ENCODE measurements at regions of chr3 and their contacts with region 1.

Region 1: DNA sequence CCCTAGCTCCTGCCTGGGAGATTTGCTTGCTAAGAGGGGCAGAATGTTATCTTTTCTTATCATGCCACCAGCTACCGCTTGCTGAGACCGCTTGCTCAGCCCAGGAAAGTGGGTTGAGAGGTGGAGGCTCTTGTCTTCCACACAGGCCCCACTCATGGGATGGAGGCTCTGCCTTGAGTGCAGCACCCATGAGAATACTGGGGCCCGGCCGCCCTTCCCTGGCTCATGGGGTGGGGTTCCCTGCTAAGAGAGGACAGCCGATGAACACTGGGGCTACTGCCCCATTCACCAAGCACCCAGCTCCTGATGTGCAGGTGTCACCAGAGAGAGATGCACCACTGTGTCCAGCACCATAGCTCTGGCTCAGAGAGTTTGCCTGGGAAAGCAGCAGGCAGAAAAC is 55.2 kb downstream of the HMCES start:
- DNase-seq: no peak
- H3K4me3 ChIP-seq: no peak overlapping the region
- H3K27ac ChIP-seq: no peak overlapping the region
- H3K4me1 ChIP-seq: no peaks in the 10 kb centered on the region
- H3K27me3 ChIP-seq: no peaks in the 10 kb centered on the region
- CTCF ChIP-seq: no peak

Region 2: GRCh38 chr3:129211772-129212171 is 122.1 kb before region 1 on chr3:
- intact Hi-C with region 1: no loop called
- DNase-seq: peak; percentile 52 to 76
- H3K4me3 ChIP-seq: no peak overlapping the region
- H3K27ac ChIP-seq: no peak overlapping the region
- H3K4me1 ChIP-seq: peaks cover 0 to 12% (median 4%) of the 10 kb centered on the region in 4 donors
- H3K27me3 ChIP-seq: no peaks in the 10 kb centered on the region
- CTCF ChIP-seq: no peak

Region 3: DNA sequence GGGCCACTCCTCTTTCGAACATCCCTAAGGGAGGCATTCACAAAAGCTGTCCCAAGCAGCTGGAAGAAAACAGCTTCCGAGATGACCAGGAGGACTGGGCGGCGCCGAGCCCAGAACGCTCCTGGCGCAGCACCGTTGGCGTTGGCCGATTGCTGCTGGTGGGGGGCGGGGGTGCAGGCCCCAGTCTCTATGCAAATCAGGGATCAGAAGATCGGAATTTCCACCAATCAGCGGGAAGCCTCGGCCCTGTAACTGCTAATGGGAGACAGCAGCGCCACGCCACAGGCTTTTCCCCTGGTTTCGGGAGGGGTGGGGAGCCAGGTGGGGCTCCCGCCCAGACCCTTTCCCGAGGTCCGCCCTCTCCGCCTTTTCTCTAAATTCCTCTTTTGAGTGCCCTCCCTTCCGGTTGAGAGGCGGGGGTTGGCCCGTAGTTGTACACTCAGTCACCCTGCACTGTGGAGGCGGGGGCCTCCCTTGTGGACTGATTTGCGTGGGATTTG is 28.2 kb before region 1 on chr3:
- intact Hi-C with region 1: loop called (anchors 2 kb)
- DNase-seq: peak; percentile 93 to 96
- H3K4me3 ChIP-seq: peak overlapping the region; percentile 40 to 51
- H3K27ac ChIP-seq: peak overlapping the region; percentile 84 to 85
- H3K4me1 ChIP-seq: peaks cover 0 to 18% (median 6%) of the 10 kb centered on the region in 4 donors
- H3K27me3 ChIP-seq: no peaks in the 10 kb centered on the region
- CTCF ChIP-seq: peak in 1 of 2 experiments; percentile 14

Measured in tibial artery (tissue), 4 donors.